Panc1 (cell line): ENCODE measurements at regions of chr15 and their contacts with region 1.

Region 1: DNA sequence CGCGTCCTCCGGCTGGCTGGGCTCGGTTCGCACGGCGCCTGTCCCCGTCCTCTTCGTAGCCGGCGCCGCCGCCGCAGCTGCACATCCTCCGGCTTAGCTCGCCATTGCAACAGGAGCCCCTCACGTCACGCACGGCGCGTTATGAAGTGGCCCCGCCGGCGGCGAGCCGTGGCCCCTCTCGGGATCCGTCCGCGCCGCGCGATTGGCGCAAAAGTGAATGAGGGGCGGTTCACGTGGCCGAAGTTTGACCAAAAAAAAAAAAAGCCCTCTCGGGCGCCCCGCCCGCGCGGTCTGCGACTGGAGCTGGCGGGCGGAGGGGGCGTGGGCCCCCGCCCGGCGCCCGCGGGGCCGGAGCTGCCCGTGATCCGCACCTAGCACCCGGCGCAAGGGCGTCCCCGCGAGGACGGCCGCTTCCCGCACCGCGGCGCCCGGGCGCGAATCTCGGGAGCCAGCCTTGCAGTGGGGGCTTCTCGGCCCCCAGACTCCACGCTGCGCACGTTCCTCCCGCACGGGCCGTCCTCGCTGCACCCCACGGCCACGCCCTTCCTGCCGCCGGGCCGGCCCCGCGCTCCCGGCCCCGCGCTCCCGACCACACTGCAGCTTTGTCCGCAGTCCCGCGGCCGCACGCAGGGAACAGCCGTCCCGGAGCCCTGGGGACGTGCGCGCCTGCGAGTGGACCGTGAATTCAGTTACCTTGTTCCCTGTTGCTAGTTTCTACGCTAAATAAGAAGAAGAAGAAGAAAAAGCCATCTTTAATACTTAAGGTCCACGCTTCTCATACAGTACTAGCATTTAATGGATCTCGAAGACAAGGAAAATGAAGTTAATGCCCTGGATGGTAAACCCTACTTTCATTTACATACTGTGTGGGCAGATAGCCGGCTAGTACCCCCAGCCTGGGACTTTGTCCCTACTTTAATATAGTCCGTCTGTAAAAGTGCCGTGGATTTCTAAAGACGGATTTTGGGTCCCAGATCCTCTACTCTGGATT is at the start of gene CHSY1:
- DNase-seq: peak; percentile 33
- ATAC-seq: peak; percentile 86
- H3K4me3 ChIP-seq: peak within 1 kb of the TSS; percentile 87 to 93
- H3K27ac ChIP-seq: peak within 1 kb of the TSS; percentile 96
- H3K4me1 ChIP-seq: peaks cover 48% of the 10 kb centered on the region
- H3K27me3 ChIP-seq: no peaks in the 10 kb centered on the region
- CTCF ChIP-seq: peak; percentile 70
- total RNA-seq, gene CHSY1: 50.8 TPM

Region 2: GRCh38 chr15:100918034-100918689 is 334.0 kb before region 1 on chr15:
- CTCF ChIA-PET with region 1: no interaction called
- POLR2A ChIA-PET with region 1: no interaction called
- in situ Hi-C with region 1: no loop called
- intact Hi-C with region 1: loop called (anchors 10 kb)
- DNase-seq: peak; percentile 55
- ATAC-seq: peak; percentile 86
- H3K4me3 ChIP-seq: peak overlapping the region; percentile 69 to 77
- H3K27ac ChIP-seq: peak overlapping the region; percentile 99
- H3K4me1 ChIP-seq: peaks cover 42% of the 10 kb centered on the region
- H3K27me3 ChIP-seq: no peaks in the 10 kb centered on the region
- CTCF ChIP-seq: peak; percentile 98